Right lobe of liver (tissue), 6 donors: ENCODE measurements at regions of chr15 and their contacts with region 1.

Region 1: GRCh38 chr15:100873029-100873677 is 6.5 kb upstream of the ALDH1A3 start:
- DNase-seq: peak in 1 of 3 donors; percentile 70
- ATAC-seq: peak; percentile 88 to 98 (median 94)
- H3K4me3 ChIP-seq: no peak overlapping the region
- H3K27ac ChIP-seq: no peak overlapping the region
- H3K4me1 ChIP-seq: no peaks in the 10 kb centered on the region
- H3K27me3 ChIP-seq: peaks cover 0 to 7% of the 10 kb centered on the region in 2 donors
- CTCF ChIP-seq: peak; percentile 89 to 98 (median 91)
- POLR2A ChIP-seq: no peak

Region 2: DNA sequence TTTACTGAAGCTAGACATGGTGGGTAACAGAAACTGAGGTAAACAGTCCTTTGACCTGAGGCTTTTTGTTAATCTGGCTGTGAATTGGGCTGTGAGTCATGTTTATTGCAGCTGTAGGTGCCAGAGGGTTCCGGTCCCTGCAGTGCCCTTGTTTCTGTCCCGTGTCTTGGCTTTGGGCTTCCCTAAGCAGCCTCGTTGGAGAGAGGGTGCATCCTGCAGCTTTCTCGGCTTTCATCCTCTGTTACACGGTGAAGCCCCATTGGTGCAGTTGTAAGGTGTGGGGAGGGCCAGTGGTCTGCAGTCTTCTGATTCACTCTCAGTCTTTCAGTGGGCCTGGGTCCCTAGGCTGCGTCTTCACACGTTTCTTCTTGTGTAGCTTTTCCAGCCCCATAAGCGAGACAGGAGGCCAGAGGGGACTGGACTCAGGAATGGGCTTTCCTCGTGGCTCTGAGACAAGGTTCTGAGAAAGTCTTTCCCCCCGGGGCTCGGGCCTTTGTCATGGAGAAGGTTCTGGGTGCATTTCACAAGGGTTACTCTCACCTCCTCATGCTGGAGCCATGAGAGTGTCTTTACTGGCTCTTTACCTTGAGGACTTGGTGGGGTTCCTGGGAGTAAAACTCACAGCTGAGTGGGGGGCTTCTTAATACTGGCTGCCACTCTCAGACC is 237.6 kb before region 1 on chr15:
- intact Hi-C with region 1: loop called (anchors 5 to 10 kb)
- DNase-seq: no peak
- ATAC-seq: peak in 3 of 4 donors; percentile 14 to 81 (median 25)
- H3K4me3 ChIP-seq: no peak overlapping the region
- H3K27ac ChIP-seq: no peak overlapping the region
- H3K4me1 ChIP-seq: peaks cover 0 to 17% (median 3%) of the 10 kb centered on the region in 4 donors
- H3K27me3 ChIP-seq: no peaks in the 10 kb centered on the region
- CTCF ChIP-seq: no peak
- POLR2A ChIP-seq: no peak

Region 3: GRCh38 chr15:100663086-100663914 is 209.9 kb before region 1 on chr15:
- intact Hi-C with region 1: loop called in 1 of 2 experiments (anchors 10 kb)
- DNase-seq: no peak
- ATAC-seq: peak in 1 of 4 donors; percentile 20
- H3K4me3 ChIP-seq: no peak overlapping the region
- H3K27ac ChIP-seq: no peak overlapping the region
- H3K4me1 ChIP-seq: no peaks in the 10 kb centered on the region
- H3K27me3 ChIP-seq: no peaks in the 10 kb centered on the region
- CTCF ChIP-seq: no peak
- POLR2A ChIP-seq: no peak